ENCODE measurements at regions of chr5 and their contacts with region 1.

Region 1: GRCh38 chr5:127088251-127089010 is 15.1 kb upstream of the C5orf63 start:
- DNase-seq: peak; percentile 95
- H3K4me3 ChIP-seq: no peak overlapping the region
- H3K27ac ChIP-seq: no peak overlapping the region
- H3K4me1 ChIP-seq: peaks cover 27% of the 10 kb centered on the region
- H3K27me3 ChIP-seq: no peaks in the 10 kb centered on the region
- CTCF ChIP-seq: no peak

Region 2: GRCh38 chr5:126433701-126434100 is 654.7 kb before region 1 on chr5:
- CTCF ChIA-PET with region 1: no interaction called
- dilution Hi-C with region 1: no loop called
- in situ Hi-C with region 1: no loop called
- intact Hi-C with region 1: no loop called
- DNase-seq: peak; percentile 68
- H3K4me3 ChIP-seq: no peak overlapping the region
- H3K27ac ChIP-seq: peak overlapping the region; percentile 59
- H3K4me1 ChIP-seq: peaks cover 15% of the 10 kb centered on the region
- H3K27me3 ChIP-seq: no peaks in the 10 kb centered on the region
- CTCF ChIP-seq: no peak

Region 3: GRCh38 chr5:127206320-127207113 is 118.1 kb after region 1 on chr5:
- CTCF ChIA-PET with region 1: no interaction called
- dilution Hi-C with region 1: no loop called
- in situ Hi-C with region 1: no loop called
- intact Hi-C with region 1: loop called (anchors 10 kb)
- DNase-seq: peak; percentile 80
- H3K4me3 ChIP-seq: no peak overlapping the region
- H3K27ac ChIP-seq: no peak overlapping the region
- H3K4me1 ChIP-seq: peaks cover 29% of the 10 kb centered on the region
- H3K27me3 ChIP-seq: no peaks in the 10 kb centered on the region
- CTCF ChIP-seq: no peak

Measured in mammary epithelial cell (primary cell).